ENCODE measurements at regions of chr2 and their contacts with region 1.

Region 1: DNA sequence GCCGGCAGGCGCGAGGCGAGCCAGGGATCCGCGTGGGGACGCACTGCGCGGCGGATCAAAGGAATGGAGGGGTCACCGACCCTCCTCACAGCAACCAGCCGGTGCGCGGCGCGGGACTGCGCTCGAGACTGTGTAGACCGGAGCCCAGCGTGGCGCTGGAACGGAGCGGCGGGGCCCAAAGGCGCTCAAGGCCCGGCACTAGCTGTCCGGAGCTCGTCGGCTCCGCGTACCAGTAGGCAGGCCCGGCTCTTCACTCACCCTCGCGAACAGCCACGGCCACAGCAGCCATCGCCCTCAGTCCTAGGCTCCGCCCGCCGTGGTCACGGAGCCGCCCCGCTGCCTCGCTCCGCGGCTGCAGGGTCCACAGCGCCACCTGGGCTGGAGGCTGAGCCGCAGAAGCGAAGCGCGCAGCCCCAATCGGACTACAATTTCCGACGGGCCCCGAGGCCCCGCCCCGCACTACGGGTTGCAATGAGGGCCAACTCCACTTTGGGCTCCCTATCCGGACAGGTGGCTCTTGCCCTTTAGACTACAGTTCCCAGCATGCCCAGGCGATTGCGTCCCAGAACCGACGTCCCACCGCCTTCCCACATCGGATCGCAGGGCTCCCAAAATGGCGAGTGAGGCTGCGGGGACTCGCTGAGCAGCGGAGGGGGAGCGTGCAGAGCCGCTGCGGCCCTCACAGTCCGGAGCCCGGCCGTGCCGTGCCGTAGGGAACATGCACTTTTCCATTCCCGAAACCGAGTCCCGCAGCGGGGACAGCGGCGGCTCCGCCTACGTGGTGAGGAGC is at the starts of genes EIF2B4 and SNX17:
- DNase-seq: peak; percentile 99 to 100 (median 99)
- H3K4me3 ChIP-seq: peak within 1 kb of the TSS; percentile 72 to 86
- H3K4me3 Mint-ChIP-seq: peak within 1 kb of the TSS; percentile 96 to 100 (median 98)
- H3K27ac ChIP-seq: peak within 1 kb of the TSS; percentile 94
- H3K27ac Mint-ChIP-seq: peak within 1 kb of the TSS; percentile 89 to 100 (median 98)
- H3K4me1 ChIP-seq: peaks cover 38% of the 10 kb centered on the region
- H3K4me1 Mint-ChIP-seq: peaks cover 28 to 58% (median 41%) of the 10 kb centered on the region in 4 donors
- H3K27me3 ChIP-seq: no peaks in the 10 kb centered on the region
- H3K27me3 Mint-ChIP-seq: no peaks in the 10 kb centered on the region
- total RNA-seq, gene EIF2B4: 48.4 to 56.0 TPM
- total RNA-seq, gene SNX17: 122 to 130 TPM

Region 2: DNA sequence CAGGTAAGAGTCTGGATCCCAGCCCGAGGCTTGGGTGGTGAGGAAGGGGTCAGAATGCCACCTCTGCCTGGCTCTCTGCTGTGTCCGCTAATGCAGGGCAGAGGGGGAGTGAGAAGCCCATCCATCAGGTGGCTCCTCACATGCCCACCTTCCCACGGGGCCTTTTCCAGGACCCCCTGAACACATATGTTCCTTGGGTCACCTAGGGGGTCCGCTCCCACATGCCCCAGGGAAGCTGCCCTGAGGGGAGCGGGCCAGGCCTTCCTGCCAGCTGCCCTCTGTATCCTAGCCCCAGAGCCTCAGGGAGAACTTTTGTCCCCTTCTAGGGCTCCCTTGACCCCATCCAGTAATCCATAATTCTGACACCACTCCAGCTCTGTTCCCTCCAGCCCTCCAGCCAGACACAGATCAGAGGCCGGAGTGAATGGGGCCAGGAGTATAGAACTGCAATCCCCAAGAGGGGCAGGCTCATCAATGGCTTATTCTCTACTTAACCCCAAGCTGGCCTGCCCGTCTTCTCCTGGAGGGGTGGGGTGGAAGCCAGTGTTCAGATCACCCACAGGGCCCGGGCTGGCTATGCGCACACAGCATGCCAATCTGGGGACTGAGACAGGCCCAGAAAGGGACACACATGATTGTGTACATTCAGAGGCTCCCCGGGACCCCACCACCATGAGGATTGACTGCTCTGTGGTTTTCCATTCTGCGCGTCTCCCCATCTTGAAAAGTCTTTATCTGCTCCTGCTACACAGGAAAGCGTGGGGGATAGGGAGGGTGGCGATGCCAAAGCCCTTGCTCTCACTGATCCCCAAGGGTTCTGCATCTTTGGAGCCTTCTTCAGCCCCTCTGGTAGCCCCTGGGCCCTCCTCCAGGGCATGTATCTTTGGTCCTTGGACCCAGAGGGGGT is 290.7 kb before region 1 on chr2:
- CTCF ChIA-PET with region 1: no interaction called
- POLR2A ChIA-PET with region 1: no interaction called
- intact Hi-C with region 1: loop called (anchors 2 kb)
- DNase-seq: no peak
- H3K4me3 ChIP-seq: no peak overlapping the region
- H3K4me3 Mint-ChIP-seq: no peak overlapping the region
- H3K27ac ChIP-seq: no peak overlapping the region
- H3K27ac Mint-ChIP-seq: peak overlapping the region in 1 of 7 donors; percentile 89
- H3K4me1 ChIP-seq: peaks cover 39% of the 10 kb centered on the region
- H3K4me1 Mint-ChIP-seq: peaks cover 23 to 43% (median 36%) of the 10 kb centered on the region in 4 donors
- H3K27me3 ChIP-seq: no peaks in the 10 kb centered on the region
- H3K27me3 Mint-ChIP-seq: peaks cover 0 to 2% of the 10 kb centered on the region in 2 donors

Region 3: GRCh38 chr2:27211829-27212627 is 158.2 kb before region 1 on chr2 and contains the starts of genes ATRAID and SLC5A6:
- CTCF ChIA-PET with region 1: no interaction called
- POLR2A ChIA-PET with region 1: interaction called, 3 read pairs
- intact Hi-C with region 1: loop called (anchors 1 kb)
- DNase-seq: peak; percentile 89 to 93 (median 92)
- H3K4me3 ChIP-seq: peak within 1 kb of the TSS; percentile 71 to 94
- H3K4me3 Mint-ChIP-seq: peak within 1 kb of the TSS; percentile 95 to 100 (median 100)
- H3K27ac ChIP-seq: peak within 1 kb of the TSS; percentile 99
- H3K27ac Mint-ChIP-seq: peak within 1 kb of the TSS; percentile 97 to 100 (median 100)
- H3K4me1 ChIP-seq: peaks cover 22% of the 10 kb centered on the region
- H3K4me1 Mint-ChIP-seq: peaks cover 23 to 37% (median 31%) of the 10 kb centered on the region in 4 donors
- H3K27me3 ChIP-seq: no peaks in the 10 kb centered on the region
- H3K27me3 Mint-ChIP-seq: no peaks in the 10 kb centered on the region
- total RNA-seq, gene ATRAID: 103 to 109 TPM
- total RNA-seq, gene SLC5A6: 21.9 to 25.1 TPM

Region 4: DNA sequence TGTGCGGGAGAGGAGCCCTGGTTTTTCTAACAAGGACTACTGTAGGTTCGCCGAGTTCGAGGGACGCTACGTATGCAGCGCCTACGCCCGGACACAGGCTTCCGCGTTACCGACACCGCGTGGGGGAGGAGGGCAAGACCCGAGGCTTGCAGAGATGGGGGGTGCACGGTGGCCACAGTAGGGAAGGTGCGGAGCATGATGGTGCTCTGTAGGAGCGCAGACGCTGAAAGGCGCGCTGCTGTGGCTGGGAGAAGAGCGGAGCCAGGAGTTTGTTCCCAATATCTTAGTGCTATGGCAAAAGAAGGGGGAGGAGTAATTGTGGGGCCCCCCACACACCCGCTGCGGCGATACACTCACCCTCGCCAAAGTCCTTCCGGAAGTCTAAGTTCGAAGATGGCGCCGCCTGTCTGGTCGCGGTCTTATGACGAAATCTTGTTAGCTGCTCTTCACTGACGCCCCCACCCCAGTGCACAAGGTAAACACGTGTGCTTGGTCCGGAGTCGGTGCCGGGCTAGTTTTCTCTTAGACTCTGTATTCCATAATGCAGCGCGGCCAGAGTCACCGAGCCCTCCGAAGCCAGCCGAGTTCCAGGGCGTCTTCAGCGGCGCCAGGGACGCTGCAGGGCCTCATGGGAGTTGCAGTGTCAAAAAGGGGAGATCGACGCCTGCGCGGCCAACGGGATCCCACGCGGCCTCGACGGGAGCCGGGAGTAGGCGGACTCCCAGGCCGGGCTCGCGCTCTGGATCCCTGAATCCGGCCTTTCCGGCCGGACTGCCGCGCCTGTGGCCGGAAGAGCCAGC is 13.6 kb before region 1 on chr2 and contains the start of gene GTF3C2:
- CTCF ChIA-PET with region 1: interaction called, 16 read pairs
- POLR2A ChIA-PET with region 1: interaction called, 49 read pairs
- intact Hi-C with region 1: loop called (anchors 1 kb)
- DNase-seq: peak; percentile 93 to 97 (median 93)
- H3K4me3 ChIP-seq: peak within 1 kb of the TSS; percentile 49 to 75
- H3K4me3 Mint-ChIP-seq: peak within 1 kb of the TSS; percentile 96 to 100 (median 98)
- H3K27ac ChIP-seq: peak within 1 kb of the TSS; percentile 85
- H3K27ac Mint-ChIP-seq: peak within 1 kb of the TSS; percentile 96 to 100 (median 99)
- H3K4me1 ChIP-seq: peaks cover 51% of the 10 kb centered on the region
- H3K4me1 Mint-ChIP-seq: peaks cover 36 to 64% (median 48%) of the 10 kb centered on the region in 4 donors
- H3K27me3 ChIP-seq: no peaks in the 10 kb centered on the region
- H3K27me3 Mint-ChIP-seq: no peaks in the 10 kb centered on the region
- total RNA-seq, gene GTF3C2: 82.9 to 90.8 TPM

Region 5: DNA sequence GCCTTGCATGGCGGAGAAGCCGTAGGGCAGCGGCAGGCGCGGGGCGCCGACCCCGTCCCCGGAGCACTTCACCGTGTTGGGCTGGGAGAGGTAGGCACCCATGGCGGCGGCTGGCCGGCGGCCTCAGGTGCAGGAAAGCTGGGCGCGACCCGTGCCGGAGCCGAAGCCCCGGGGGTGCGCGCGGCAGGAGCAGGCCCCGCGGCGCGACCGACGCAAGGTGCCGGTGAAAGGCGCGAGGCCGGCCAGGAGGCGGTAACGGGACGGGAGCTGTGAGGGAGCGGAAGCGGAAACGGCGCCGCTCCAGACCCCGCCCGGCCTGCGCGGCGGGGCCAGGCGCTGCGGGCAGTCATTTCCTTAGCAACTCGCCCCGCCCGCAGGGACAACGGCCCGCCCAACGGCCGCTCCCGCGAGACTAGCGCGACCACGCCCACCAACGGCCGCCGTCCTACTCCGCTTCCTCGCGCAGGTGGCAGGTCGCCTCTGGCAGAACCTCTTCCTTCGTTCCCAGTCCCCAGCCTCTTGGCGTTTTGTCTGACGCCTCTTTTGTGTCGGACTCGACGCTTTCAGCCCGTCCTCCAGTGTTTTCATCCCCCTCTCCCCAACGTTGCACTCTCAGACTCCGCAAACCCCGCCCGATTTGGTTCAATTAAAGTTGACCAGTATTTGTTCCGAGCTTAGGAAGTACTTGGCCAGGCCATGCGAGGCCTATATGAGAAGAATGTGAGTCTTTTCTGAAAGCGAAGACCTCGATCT is 39.3 kb after region 1 on chr2 and contains the start of gene PPM1G:
- CTCF ChIA-PET with region 1: interaction called, 10 read pairs
- POLR2A ChIA-PET with region 1: interaction called, 43 read pairs
- intact Hi-C with region 1: loop called (anchors 1 kb)
- DNase-seq: peak; percentile 94 to 95 (median 94)
- H3K4me3 ChIP-seq: peak within 1 kb of the TSS; percentile 61 to 92
- H3K4me3 Mint-ChIP-seq: peak within 1 kb of the TSS; percentile 87 to 94 (median 90)
- H3K27ac ChIP-seq: peak within 1 kb of the TSS; percentile 85
- H3K27ac Mint-ChIP-seq: peak within 1 kb of the TSS; percentile 91 to 99 (median 96)
- H3K4me1 ChIP-seq: peaks cover 36% of the 10 kb centered on the region
- H3K4me1 Mint-ChIP-seq: peaks cover 25 to 47% (median 34%) of the 10 kb centered on the region in 4 donors
- H3K27me3 ChIP-seq: no peaks in the 10 kb centered on the region
- H3K27me3 Mint-ChIP-seq: peaks cover 1 to 2% of the 10 kb centered on the region in 2 donors
- total RNA-seq, gene PPM1G: 53.8 to 56.1 TPM

Region 6: DNA sequence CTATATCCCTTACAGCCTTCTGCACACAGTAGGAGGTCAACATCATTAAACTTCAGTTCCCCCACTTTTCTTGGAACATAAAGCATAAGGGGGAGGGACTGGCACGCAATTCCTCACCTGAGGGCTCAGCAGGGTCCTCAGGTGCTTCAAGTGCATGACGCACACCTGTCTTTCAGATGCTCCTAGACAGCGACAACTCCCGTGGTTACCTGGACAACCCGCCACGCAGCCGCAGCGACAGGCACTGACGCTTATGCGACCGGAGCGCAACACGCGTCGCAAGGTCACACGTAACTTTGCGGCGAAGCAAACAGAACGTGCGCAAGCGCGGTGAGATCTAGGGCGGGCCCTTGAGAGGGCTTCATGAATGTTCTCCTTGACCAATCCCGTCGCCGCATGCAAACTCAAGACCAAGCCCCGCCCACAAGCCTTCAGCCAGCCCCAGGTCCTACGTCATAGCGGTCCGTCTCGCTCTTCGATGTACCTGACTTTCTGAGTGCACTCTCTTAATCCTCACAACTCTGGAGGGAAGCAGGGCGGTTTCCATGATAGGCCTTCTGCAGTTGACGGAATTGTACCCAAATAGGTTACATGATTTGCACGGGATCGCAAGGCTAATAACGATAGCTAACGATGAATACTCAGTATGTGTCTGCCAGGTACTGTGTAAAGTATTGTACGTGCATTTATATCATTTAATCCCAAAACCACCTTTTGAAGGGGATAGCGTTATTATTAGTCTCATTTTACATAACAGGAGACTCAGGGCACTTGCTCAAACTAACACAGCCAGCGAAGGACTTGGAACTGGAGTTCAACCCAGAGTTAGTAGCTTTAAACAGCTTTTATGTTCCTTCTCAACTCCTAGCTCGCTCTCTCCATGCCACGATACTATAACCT is 119.5 kb after region 1 on chr2 and contains the start of gene IFT172:
- CTCF ChIA-PET with region 1: no interaction called
- POLR2A ChIA-PET with region 1: interaction called, 7 read pairs
- intact Hi-C with region 1: loop called (anchors 1 kb)
- DNase-seq: peak; percentile 96 to 100 (median 100)
- H3K4me3 ChIP-seq: peak within 1 kb of the TSS; percentile 52 to 92
- H3K4me3 Mint-ChIP-seq: peak within 1 kb of the TSS; percentile 59 to 93 (median 84)
- H3K27ac ChIP-seq: peak within 1 kb of the TSS; percentile 81
- H3K27ac Mint-ChIP-seq: peak within 1 kb of the TSS; percentile 71 to 100 (median 99)
- H3K4me1 ChIP-seq: peaks cover 18% of the 10 kb centered on the region
- H3K4me1 Mint-ChIP-seq: peaks cover 11 to 20% (median 13%) of the 10 kb centered on the region in 4 donors
- H3K27me3 ChIP-seq: peaks cover 6% of the 10 kb centered on the region
- H3K27me3 Mint-ChIP-seq: peaks cover 4% of the 10 kb centered on the region in 2 donors
- total RNA-seq, gene IFT172: 23.6 to 24.4 TPM

Region 7: GRCh38 chr2:27663463-27664249 is 293.4 kb after region 1 on chr2 and contains the starts of genes SLC4A1AP and SUPT7L:
- CTCF ChIA-PET with region 1: no interaction called
- POLR2A ChIA-PET with region 1: interaction called, 4 read pairs
- intact Hi-C with region 1: loop called (anchors 1 kb)
- DNase-seq: peak; percentile 82 to 85 (median 85)
- H3K4me3 ChIP-seq: peak within 1 kb of the TSS; percentile 99
- H3K4me3 Mint-ChIP-seq: peak within 1 kb of the TSS; percentile 96 to 100 (median 100)
- H3K27ac ChIP-seq: peak within 1 kb of the TSS; percentile 99
- H3K27ac Mint-ChIP-seq: peak within 1 kb of the TSS; percentile 98 to 100 (median 99)
- H3K4me1 ChIP-seq: peaks cover 31% of the 10 kb centered on the region
- H3K4me1 Mint-ChIP-seq: peaks cover 31 to 63% (median 49%) of the 10 kb centered on the region in 4 donors
- H3K27me3 ChIP-seq: no peaks in the 10 kb centered on the region
- H3K27me3 Mint-ChIP-seq: no peaks in the 10 kb centered on the region
- total RNA-seq, gene SLC4A1AP: 24.4 to 26.6 TPM
- total RNA-seq, gene SUPT7L: 45.4 to 48.5 TPM